ENCODE measurements at regions of chr5 and their contacts with region 1.

Region 1: DNA sequence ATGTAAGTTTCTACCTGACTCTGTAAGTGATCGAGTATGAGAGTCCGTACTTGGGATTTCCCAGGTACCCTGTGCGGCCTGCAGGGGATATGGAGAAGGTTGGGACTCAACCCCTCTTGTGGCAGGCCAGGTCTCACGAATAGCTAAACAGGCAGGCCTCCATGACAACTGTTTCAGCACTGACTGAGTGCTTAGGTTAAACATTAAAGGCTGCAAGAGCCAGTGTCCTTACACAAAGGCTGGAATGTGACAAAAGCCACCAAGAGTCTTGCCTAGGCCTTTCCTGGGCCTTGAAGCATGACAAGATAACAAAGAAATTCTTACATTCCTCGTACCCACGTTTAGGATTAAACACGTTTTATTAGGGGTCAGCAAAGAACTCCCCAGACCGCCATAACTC is 58.6 kb downstream of the THBS4 start:
- DNase-seq: no peak
- H3K4me3 ChIP-seq: no peak overlapping the region
- CTCF ChIP-seq: no peak
- POLR2A ChIP-seq: no peak

Region 2: GRCh38 chr5:80034962-80035821 is 58.6 kb before region 1 on chr5 and contains the start of gene THBS4:
- intact Hi-C with region 1: no loop called
- DNase-seq: no peak
- H3K4me3 ChIP-seq: no peak within 1 kb of the TSS
- CTCF ChIP-seq: no peak
- POLR2A ChIP-seq: no peak
- total RNA-seq, gene THBS4: 0.08 to 2.0 (median 0.51) TPM

Region 3: DNA sequence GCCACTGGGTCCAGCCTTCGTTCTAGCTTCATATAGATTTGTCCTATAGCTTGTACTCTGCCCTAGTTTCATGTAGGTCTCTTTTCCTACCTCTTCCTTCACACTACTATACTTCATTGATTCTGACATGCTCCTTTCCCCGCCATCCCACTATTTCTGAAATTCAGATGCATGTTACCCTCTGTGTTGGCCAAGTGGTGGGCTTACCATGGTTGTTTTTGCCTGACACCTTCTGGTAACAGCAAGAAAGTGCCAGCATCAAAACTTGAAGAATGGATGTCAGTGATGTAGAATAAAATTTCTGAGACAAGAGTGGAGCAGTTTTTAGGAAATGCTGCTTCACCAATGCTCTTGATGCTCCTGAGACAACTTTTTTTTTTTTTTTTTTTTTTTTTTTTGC is 181.6 kb after region 1 on chr5:
- intact Hi-C with region 1: loop called (anchors 10 kb)
- DNase-seq: no peak
- H3K4me3 ChIP-seq: no peak overlapping the region
- CTCF ChIP-seq: no peak
- POLR2A ChIP-seq: no peak

Region 4: DNA sequence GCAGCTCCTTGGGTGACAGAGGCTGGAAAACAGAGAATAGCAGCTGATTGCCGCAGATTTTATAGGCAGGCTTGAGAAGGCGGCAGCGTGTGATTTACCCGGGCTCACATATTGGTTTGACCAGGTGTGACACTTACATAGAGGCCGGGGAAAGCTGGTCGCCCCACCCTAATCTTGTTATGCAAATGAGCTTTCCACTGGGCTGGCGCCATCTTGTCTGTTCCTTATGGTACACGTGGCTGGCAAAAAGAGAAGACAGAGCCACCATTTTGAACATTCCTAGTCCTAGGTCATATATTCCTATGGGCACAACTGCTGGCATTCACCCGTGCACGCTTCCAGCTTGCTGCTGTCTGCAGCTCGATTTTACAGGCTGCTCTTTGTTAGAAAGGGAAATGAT is 214.7 kb after region 1 on chr5:
- intact Hi-C with region 1: loop called (anchors 2 kb)
- DNase-seq: no peak
- H3K4me3 ChIP-seq: no peak overlapping the region
- CTCF ChIP-seq: no peak
- POLR2A ChIP-seq: no peak

Region 5: GRCh38 chr5:80541392-80541791 is 447.6 kb after region 1 on chr5:
- intact Hi-C with region 1: no loop called
- DNase-seq: no peak
- H3K4me3 ChIP-seq: no peak overlapping the region
- CTCF ChIP-seq: no peak
- POLR2A ChIP-seq: no peak